ENCODE measurements at regions of chr18 and their contacts with region 1.

Region 1: DNA sequence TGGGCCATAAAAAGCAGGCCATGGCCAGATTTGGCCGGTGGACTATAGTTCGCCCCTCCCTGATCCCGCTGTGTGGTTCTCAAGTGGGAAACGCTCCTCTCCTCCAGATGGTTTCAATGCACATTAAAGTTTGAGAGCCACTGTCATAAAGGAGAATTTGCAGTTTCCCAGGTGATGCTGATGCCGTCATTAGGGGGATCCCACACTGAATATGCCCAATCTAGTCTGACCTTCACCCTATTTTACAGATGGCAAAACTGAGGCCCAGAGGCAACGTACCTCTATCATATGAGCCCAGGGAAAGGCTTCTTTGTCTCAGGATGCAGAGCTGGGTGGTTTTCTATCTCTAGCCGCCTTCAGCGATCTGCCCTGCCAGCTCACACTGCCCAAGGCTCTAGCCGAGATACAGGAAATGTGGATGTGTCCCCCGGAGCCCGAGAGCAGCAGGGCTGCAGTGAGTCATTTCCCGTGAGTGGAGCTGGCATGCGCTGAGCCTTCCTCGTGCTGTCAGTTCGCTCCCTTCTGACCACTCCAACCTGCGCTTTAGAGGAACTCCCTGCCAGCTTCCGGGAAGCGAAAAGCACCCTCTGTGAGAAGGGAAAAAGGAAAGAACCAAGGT is 116.2 kb downstream of the SMAD7 start:
- DNase-seq: peak; percentile 94
- H3K4me3 ChIP-seq: no peak overlapping the region
- H3K27ac ChIP-seq: peak overlapping the region; percentile 20
- H3K4me1 ChIP-seq: peaks cover 53% of the 10 kb centered on the region
- H3K27me3 ChIP-seq: no peaks in the 10 kb centered on the region
- CTCF ChIP-seq: no peak

Region 2: GRCh38 chr18:48848641-48849159 is 14.2 kb after region 1 on chr18:
- CTCF ChIA-PET with region 1: no interaction called
- dilution Hi-C with region 1: no loop called
- in situ Hi-C with region 1: no loop called
- intact Hi-C with region 1: loop called (anchors 1 kb)
- DNase-seq: peak; percentile 84
- H3K4me3 ChIP-seq: no peak overlapping the region
- H3K27ac ChIP-seq: peak overlapping the region; percentile 36
- H3K4me1 ChIP-seq: peaks cover 26% of the 10 kb centered on the region
- H3K27me3 ChIP-seq: no peaks in the 10 kb centered on the region
- CTCF ChIP-seq: no peak

Region 3: GRCh38 chr18:48896690-48897511 is 62.4 kb after region 1 on chr18:
- CTCF ChIA-PET with region 1: no interaction called
- dilution Hi-C with region 1: no loop called
- in situ Hi-C with region 1: no loop called
- intact Hi-C with region 1: no loop called
- DNase-seq: peak; percentile 22
- H3K4me3 ChIP-seq: no peak overlapping the region
- H3K27ac ChIP-seq: no peak overlapping the region
- H3K4me1 ChIP-seq: peaks cover 22% of the 10 kb centered on the region
- H3K27me3 ChIP-seq: no peaks in the 10 kb centered on the region
- CTCF ChIP-seq: no peak

Region 4: DNA sequence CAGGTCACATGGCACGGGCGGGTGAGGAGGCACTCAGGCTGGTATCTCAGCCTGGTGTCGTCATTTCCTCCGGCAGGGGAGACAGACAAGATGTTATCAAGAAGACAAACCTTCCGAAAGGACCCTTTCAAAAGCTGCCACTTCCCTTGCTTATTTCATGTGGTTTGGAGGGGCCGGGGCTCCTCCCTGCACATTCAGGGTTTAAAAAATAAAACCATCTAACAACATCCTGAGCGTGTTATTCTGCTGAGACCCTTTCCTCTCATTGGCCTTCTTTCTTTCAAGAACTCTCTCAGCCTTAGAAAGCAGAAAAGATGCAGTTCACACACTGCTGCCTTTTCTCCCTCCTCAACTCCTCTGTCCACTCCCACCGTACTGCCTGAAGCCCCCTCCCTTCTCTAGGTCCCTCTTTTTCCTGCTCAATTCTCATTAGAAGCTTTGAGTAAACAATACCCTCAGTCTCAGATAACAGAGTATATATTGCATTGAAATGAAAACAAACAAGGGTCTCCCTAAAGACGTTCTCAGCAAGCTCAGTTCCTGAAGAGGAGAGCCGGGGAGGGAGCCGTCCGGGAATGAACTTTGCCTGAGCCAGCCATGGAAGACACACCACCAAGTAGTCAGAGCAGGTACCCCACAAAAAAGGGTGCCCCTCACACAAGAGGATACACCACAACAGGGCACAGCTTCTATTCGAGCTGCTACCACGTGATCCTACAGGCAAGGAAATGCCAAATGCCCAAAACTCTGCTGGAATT is 106.5 kb after region 1 on chr18:
- CTCF ChIA-PET with region 1: no interaction called
- dilution Hi-C with region 1: no loop called
- in situ Hi-C with region 1: no loop called
- intact Hi-C with region 1: loop called (anchors 5 kb)
- DNase-seq: no peak
- H3K4me3 ChIP-seq: no peak overlapping the region
- H3K27ac ChIP-seq: no peak overlapping the region
- H3K4me1 ChIP-seq: peaks cover 77% of the 10 kb centered on the region
- H3K27me3 ChIP-seq: no peaks in the 10 kb centered on the region
- CTCF ChIP-seq: no peak